CD4-positive, alpha-beta T cell (primary cell): ENCODE measurements at regions of chr7 and their contacts with region 1.

Region 1: DNA sequence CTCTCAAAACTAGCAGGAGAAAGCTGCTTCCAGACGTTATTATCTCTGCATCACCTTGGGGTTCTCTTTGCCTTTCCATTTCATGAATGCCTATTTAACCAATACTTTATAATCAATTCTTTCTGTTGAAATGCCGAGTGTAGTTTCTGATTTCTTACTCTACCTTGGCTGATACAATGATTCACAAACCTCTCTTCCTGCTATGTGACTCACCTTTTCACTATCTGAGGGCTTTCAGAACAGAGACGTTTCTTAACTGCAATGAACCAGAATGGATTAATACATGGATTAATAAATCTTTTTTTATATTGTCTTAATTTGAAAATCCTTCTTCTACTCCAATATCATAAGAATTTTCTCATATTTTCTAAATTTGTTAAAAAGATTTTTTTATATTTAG is 46.4 kb upstream of the ZNF746 start:
- DNase-seq: no peak
- ATAC-seq: no peak
- H3K4me3 ChIP-seq: no peak overlapping the region
- H3K4me3 Mint-ChIP-seq: no peak overlapping the region
- H3K27ac ChIP-seq: no peak overlapping the region
- H3K27ac Mint-ChIP-seq: no peak overlapping the region
- H3K4me1 ChIP-seq: no peaks in the 10 kb centered on the region
- H3K4me1 Mint-ChIP-seq: no peaks in the 10 kb centered on the region
- H3K27me3 ChIP-seq: no peaks in the 10 kb centered on the region
- H3K27me3 Mint-ChIP-seq: no peaks in the 10 kb centered on the region
- CTCF ChIP-seq: no peak

Region 2: DNA sequence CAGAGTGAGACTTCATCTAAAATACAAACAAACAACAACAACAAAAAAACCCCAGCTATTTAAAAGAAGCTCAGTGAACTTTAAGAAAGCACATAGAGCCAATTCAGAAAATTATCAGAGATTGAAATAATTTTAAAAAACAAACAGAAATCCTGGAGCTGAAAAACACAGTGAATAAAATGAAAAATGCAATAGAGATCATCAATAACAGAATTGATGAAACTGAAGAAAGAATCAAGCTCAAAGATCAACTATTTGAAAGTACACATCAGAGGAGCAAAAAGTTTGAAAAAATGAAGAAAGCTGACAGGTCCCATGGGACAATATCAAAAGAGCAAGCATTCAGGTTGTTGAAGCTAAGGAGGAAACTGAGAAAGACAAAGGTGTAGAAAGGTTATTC is 34.3 kb before region 1 on chr7:
- CTCF ChIA-PET with region 1: no interaction called
- POLR2A ChIA-PET with region 1: no interaction called
- intact Hi-C with region 1: no loop called
- DNase-seq: no peak
- ATAC-seq: no peak
- H3K4me3 ChIP-seq: no peak overlapping the region
- H3K4me3 Mint-ChIP-seq: no peak overlapping the region
- H3K27ac ChIP-seq: no peak overlapping the region
- H3K27ac Mint-ChIP-seq: no peak overlapping the region
- H3K4me1 ChIP-seq: no peaks in the 10 kb centered on the region
- H3K4me1 Mint-ChIP-seq: no peaks in the 10 kb centered on the region
- H3K27me3 ChIP-seq: no peaks in the 10 kb centered on the region
- H3K27me3 Mint-ChIP-seq: no peaks in the 10 kb centered on the region
- CTCF ChIP-seq: no peak

Region 3: DNA sequence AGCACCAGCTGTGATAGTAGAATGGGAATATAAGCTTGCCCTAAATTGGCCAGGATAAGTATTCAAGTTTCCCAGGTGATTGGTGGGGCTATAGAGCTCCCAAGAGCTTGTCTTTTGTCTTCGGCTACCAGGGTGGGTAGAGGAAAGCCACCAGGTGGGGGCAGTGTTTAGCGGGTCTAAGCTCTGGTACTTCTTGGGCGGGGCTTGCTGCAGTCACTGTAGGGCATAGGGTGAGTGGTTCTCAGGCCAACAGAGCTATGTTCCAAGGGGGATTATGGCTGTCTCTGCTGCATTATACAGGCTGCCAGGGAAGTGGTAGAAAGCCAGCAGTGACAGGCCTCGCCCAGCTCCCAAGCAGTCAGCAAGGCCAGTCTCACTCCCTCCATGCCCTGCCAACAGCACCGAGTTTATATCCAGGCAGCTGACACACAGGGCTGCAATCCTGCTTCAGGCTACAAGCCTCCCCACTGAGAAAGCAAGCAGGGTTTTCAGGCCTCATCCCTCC is 118.6 kb after region 1 on chr7:
- CTCF ChIA-PET with region 1: no interaction called
- POLR2A ChIA-PET with region 1: no interaction called
- intact Hi-C with region 1: no loop called
- DNase-seq: peak; percentile 33 to 74 (median 55)
- ATAC-seq: peak; percentile 80
- H3K4me3 ChIP-seq: no peak overlapping the region
- H3K4me3 Mint-ChIP-seq: no peak overlapping the region
- H3K27ac ChIP-seq: no peak overlapping the region
- H3K27ac Mint-ChIP-seq: no peak overlapping the region
- H3K4me1 ChIP-seq: no peaks in the 10 kb centered on the region
- H3K4me1 Mint-ChIP-seq: no peaks in the 10 kb centered on the region
- H3K27me3 ChIP-seq: peaks cover 0 to 6% of the 10 kb centered on the region in 2 experiments
- H3K27me3 Mint-ChIP-seq: peaks cover 75% of the 10 kb centered on the region
- CTCF ChIP-seq: peak; percentile 38

Region 4: GRCh38 chr7:150410680-150411346 is 866.8 kb after region 1 on chr7:
- CTCF ChIA-PET with region 1: no interaction called
- POLR2A ChIA-PET with region 1: no interaction called
- intact Hi-C with region 1: loop called in 1 of 2 experiments (anchors 5 kb)
- DNase-seq: no peak
- ATAC-seq: no peak
- H3K4me3 ChIP-seq: no peak overlapping the region
- H3K4me3 Mint-ChIP-seq: no peak overlapping the region
- H3K27ac ChIP-seq: no peak overlapping the region
- H3K27ac Mint-ChIP-seq: peak overlapping the region; percentile 51
- H3K4me1 ChIP-seq: peaks cover 18% of the 10 kb centered on the region
- H3K4me1 Mint-ChIP-seq: peaks cover 17% of the 10 kb centered on the region
- H3K27me3 ChIP-seq: no peaks in the 10 kb centered on the region
- H3K27me3 Mint-ChIP-seq: no peaks in the 10 kb centered on the region
- CTCF ChIP-seq: no peak